ENCODE measurements at regions of chr1 and their contacts with region 1.

Region 1: DNA sequence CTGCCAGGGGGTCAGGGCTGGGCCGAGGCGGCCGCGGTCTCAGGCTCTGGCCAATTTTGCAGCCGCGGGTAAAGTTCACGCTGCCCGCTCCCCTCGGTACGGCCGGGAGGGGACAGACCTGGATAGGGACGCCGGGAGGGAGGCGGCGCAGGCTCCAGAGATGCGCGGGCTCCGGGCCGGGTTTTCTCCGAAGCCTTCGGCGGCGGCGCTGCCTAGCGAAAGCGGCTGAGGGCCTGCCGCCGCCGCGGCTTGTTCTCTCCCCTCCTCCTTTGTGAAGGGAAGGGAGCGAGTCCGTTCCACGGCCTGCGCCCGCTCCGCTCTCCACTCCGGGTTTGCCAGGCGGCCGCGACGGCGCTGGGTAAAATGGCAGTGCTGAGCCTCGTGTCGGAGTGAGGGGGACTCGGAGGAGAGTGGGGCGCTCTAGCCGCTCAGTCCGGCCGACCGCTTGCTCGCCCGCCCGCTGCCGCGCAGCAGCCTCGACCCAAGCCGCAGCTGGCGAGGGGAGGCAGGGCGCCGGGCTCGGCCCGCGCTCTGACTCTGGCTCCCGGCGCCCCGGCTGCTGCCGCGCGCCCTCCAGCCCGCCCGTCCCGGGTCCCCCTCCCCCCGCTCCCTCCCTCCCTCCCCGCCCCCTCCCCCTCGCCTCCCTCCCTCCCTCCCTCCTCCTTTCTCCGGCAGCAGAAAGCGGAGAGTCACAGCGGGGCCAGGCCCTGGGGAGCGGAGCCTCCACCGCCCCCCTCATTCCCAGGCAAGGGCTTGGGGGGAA is at the start of gene ARID1A:
- DNase-seq: peak; percentile 96 to 98 (median 96)
- ATAC-seq: peak; percentile 69 to 78 (median 70)
- H3K4me3 ChIP-seq: peak within 1 kb of the TSS; percentile 73 to 99 (median 93)
- H3K27ac ChIP-seq: peak within 1 kb of the TSS; percentile 80 to 96 (median 94)
- H3K4me1 ChIP-seq: peaks cover 33 to 54% (median 34%) of the 10 kb centered on the region in 3 donors
- H3K27me3 ChIP-seq: no peaks in the 10 kb centered on the region
- CTCF ChIP-seq: no peak
- total RNA-seq, gene ARID1A: 24.0 to 39.9 (median 27.4) TPM

Region 2: DNA sequence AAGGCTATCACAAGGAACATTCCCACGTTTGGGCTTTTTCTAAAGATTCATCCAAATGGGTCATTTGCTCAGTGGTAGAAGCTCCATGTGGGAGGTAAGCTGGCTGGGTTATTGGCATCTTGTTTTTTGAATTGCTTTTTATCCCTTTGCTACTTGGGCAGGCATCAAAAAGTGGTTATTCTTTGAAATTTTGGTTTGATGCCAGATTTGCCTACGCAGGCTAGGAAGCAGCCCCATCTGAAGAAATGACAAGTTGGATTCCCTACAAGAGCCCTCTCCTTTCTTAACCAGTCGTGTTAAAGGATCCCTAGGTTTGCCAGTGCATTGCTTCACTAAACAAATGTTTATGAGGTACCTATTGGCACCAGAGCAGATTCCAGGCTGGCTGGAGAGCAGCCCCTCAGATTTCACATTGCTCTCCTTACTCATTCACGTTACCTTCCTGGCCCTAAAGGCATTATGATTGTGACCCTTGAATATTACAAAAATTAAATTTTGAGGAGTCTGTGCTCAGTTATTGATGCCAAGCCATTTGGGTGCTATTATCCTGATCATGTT is 39.0 kb after region 1 on chr1:
- intact Hi-C with region 1: loop called in 1 of 3 experiments (anchors 5 kb)
- DNase-seq: no peak
- ATAC-seq: no peak
- H3K4me3 ChIP-seq: no peak overlapping the region
- H3K27ac ChIP-seq: no peak overlapping the region
- H3K4me1 ChIP-seq: no peaks in the 10 kb centered on the region
- H3K27me3 ChIP-seq: no peaks in the 10 kb centered on the region
- CTCF ChIP-seq: no peak